ENCODE measurements at regions of chr19 and their contacts with region 1.

Region 1: DNA sequence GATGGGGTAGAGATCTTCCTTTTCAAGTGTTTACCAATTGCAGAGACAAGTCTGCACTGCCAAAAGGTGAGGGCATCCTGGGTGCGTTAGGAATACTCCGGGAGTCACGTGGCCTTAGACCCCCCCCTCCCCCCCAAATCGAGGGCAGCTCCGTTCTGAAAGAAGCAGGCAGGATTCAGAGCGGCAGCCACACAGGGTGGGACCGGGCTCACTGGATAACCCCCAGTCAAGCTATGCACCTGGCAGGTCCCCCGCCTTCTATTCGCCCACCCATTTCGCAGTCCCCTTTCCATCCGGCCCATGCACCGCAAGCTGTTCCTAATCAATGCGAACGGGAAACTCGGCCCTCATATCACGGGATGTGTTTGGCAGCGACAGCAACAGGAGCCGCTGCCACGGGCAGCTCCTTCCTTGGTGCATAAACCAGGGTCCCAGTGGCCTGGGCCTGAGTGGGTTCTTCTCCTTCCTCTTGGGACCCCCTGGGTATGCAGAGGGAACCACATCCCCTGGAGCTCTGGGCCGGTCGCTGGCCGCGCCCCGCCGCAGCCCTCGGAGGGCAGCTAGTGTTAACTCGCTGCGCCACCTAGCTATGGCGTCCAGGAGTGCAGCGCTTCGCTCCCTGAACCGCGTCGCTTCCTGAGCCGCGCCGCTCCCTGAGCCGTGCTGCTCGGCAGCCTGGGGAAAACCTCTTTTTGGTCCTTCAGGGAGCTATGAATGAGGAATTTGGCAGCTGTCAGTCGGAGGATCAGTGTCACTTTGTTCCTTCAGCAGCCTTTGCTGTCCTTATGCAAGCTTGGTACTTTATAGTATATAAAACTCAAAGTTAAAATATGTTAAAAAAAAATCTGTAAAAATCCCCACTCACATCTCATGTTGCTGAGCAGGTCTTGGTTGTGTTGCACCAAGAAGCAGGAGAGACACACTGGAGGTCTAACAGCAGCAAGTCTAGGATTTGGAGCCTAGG is 41.4 kb downstream of the LYL1 start:
- DNase-seq: peak; percentile 74
- ATAC-seq: peak; percentile 99
- H3K4me3 Mint-ChIP-seq: peak overlapping the region; percentile 81
- H3K27ac Mint-ChIP-seq: no peak overlapping the region
- H3K4me1 Mint-ChIP-seq: peaks cover 5% of the 10 kb centered on the region
- H3K27me3 Mint-ChIP-seq: peaks cover 14% of the 10 kb centered on the region
- CTCF ChIP-seq: peak; percentile 93

Region 2: GRCh38 chr19:12974301-12975220 is 86.7 kb before region 1 on chr19:
- CTCF ChIA-PET with region 1: interaction called, 78 read pairs
- POLR2A ChIA-PET with region 1: interaction called, 3 read pairs
- intact Hi-C with region 1: loop called (anchors 1 kb)
- DNase-seq: no peak
- ATAC-seq: no peak
- H3K4me3 Mint-ChIP-seq: no peak overlapping the region
- H3K27ac Mint-ChIP-seq: no peak overlapping the region
- H3K4me1 Mint-ChIP-seq: peaks cover 6% of the 10 kb centered on the region
- H3K27me3 Mint-ChIP-seq: peaks cover 7% of the 10 kb centered on the region
- CTCF ChIP-seq: no peak

Region 3: GRCh38 chr19:13012690-13013608 is 48.3 kb before region 1 on chr19:
- CTCF ChIA-PET with region 1: interaction called, 11 read pairs
- POLR2A ChIA-PET with region 1: interaction called, 6 read pairs
- intact Hi-C with region 1: no loop called
- DNase-seq: no peak
- ATAC-seq: peak; percentile 57
- H3K4me3 Mint-ChIP-seq: peak overlapping the region; percentile 89
- H3K27ac Mint-ChIP-seq: peak overlapping the region; percentile 88
- H3K4me1 Mint-ChIP-seq: peaks cover 41% of the 10 kb centered on the region
- H3K27me3 Mint-ChIP-seq: peaks cover 65% of the 10 kb centered on the region
- CTCF ChIP-seq: no peak

Region 4: GRCh38 chr19:13033819-13034611 is 27.2 kb before region 1 on chr19:
- CTCF ChIA-PET with region 1: interaction called, 15 read pairs
- POLR2A ChIA-PET with region 1: no interaction called
- intact Hi-C with region 1: no loop called
- DNase-seq: no peak
- ATAC-seq: peak; percentile 88
- H3K4me3 Mint-ChIP-seq: no peak overlapping the region
- H3K27ac Mint-ChIP-seq: no peak overlapping the region
- H3K4me1 Mint-ChIP-seq: no peaks in the 10 kb centered on the region
- H3K27me3 Mint-ChIP-seq: peaks cover 14% of the 10 kb centered on the region
- CTCF ChIP-seq: no peak

Measured in activated B cell treated with CpG ODN at 0.5 μM for 24 hours (primary cell).